CD8-positive, alpha-beta T cell (primary cell): ENCODE measurements at regions of chr19 and their contacts with region 1.

Region 1: DNA sequence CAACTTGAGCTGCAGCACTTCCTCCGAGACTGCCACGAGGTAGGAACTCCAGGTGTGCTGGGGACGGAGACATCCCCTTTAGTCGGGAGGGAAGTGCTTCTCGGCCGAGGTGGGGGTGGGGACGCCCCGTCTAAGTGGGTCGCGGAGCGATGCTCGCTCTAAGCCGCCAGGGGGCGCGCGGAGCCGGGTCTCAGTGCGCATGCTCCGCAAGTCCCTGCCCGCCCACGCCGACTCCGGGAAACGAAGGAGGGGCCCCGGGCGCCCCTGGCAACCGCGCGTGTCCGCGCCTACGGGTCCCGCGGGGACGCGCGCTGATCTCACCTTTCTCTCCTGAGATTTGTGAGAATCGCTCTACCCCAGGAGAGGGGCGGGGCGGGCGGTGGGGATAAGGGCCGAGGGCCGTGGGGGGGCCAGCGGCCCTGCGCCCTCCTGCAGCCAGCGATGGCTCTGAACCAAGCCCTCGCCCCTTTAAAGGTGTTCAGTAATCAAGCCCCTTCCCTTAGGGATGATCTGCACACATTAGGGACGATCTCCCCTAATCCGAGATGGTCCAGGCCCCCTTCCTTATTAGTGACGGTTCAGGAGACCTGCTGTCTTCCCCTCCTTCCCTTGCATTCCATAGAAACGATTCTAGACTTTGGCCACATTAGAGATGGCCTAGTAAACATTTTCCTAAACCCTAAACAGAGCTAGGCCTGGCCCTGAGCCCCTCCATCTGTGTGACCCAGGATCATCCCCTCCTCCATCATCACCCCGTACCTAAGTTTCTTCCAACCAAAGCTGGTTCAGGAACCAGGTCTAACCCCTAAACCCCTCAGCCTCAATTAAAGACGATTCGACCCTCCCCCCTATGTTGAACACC is 47.3 kb upstream of the SHKBP1 start:
- DNase-seq: peak; percentile 77 to 94 (median 89)
- ATAC-seq: peak; percentile 90
- H3K4me3 ChIP-seq: peak overlapping the region; percentile 41 to 46
- H3K4me3 Mint-ChIP-seq: peak overlapping the region; percentile 66
- H3K27ac ChIP-seq: no peak overlapping the region
- H3K27ac Mint-ChIP-seq: peak overlapping the region; percentile 33
- H3K4me1 ChIP-seq: peaks cover 13% of the 10 kb centered on the region
- H3K4me1 Mint-ChIP-seq: peaks cover 14% of the 10 kb centered on the region
- H3K27me3 ChIP-seq: peaks cover 5 to 8% of the 10 kb centered on the region in 2 experiments
- H3K27me3 Mint-ChIP-seq: peaks cover 20% of the 10 kb centered on the region
- CTCF ChIP-seq: peak; percentile 92

Region 2: DNA sequence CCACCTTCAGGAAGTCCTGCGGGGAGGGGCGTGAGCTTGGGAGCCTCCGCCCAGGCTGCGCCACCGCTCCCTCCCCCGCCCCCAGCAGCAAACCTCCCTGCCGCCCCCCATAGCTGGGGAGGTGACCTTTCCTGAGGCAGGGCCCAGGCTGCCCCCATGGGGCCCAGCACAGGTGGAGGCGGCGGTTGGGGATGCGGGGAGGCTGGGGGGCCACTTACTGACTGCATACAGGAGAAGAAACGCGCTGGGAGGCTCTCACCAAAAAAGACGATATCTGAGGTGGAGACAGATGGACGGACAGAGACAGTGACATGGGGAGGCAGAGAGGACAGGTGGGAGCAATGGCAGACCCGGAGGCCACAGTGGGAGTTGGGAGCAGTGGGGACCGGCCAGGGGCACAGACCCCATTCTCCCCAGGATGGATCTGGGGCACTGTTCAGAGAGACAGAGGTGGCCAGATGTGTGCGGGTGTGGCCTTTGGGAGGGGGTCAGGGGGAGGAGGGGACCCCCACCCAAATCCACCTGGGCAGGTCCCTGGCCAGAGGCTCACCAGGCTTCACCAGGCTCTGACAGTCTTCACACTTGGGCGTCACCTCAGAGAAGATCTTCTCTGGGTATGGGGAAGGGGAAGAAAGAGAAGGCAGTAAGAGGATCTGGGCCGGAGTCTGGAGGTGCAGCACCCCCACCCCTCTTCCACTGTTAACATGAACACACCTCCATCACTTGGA is 1648.3 kb before region 1 on chr19:
- CTCF ChIA-PET with region 1: no interaction called
- POLR2A ChIA-PET with region 1: no interaction called
- intact Hi-C with region 1: no loop called
- DNase-seq: no peak
- ATAC-seq: no peak
- H3K4me3 ChIP-seq: no peak overlapping the region
- H3K4me3 Mint-ChIP-seq: no peak overlapping the region
- H3K27ac ChIP-seq: peak overlapping the region in 1 of 2 experiments; percentile 95
- H3K27ac Mint-ChIP-seq: peak overlapping the region; percentile 69
- H3K4me1 ChIP-seq: peaks cover 36% of the 10 kb centered on the region
- H3K4me1 Mint-ChIP-seq: peaks cover 34% of the 10 kb centered on the region
- H3K27me3 ChIP-seq: no peaks in the 10 kb centered on the region
- H3K27me3 Mint-ChIP-seq: no peaks in the 10 kb centered on the region
- CTCF ChIP-seq: no peak

Region 3: GRCh38 chr19:40502647-40503319 is 26.5 kb before region 1 on chr19:
- CTCF ChIA-PET with region 1: no interaction called
- POLR2A ChIA-PET with region 1: no interaction called
- intact Hi-C with region 1: no loop called
- DNase-seq: no peak
- ATAC-seq: no peak
- H3K4me3 ChIP-seq: no peak overlapping the region
- H3K4me3 Mint-ChIP-seq: no peak overlapping the region
- H3K27ac ChIP-seq: no peak overlapping the region
- H3K27ac Mint-ChIP-seq: no peak overlapping the region
- H3K4me1 ChIP-seq: no peaks in the 10 kb centered on the region
- H3K4me1 Mint-ChIP-seq: no peaks in the 10 kb centered on the region
- H3K27me3 ChIP-seq: no peaks in the 10 kb centered on the region
- H3K27me3 Mint-ChIP-seq: peaks cover 20% of the 10 kb centered on the region
- CTCF ChIP-seq: no peak

Region 4: GRCh38 chr19:40542202-40542859 is 13.0 kb after region 1 on chr19:
- CTCF ChIA-PET with region 1: interaction called, 11 read pairs
- POLR2A ChIA-PET with region 1: no interaction called
- intact Hi-C with region 1: no loop called
- DNase-seq: no peak
- ATAC-seq: no peak
- H3K4me3 ChIP-seq: no peak overlapping the region
- H3K4me3 Mint-ChIP-seq: no peak overlapping the region
- H3K27ac ChIP-seq: no peak overlapping the region
- H3K27ac Mint-ChIP-seq: no peak overlapping the region
- H3K4me1 ChIP-seq: no peaks in the 10 kb centered on the region
- H3K4me1 Mint-ChIP-seq: no peaks in the 10 kb centered on the region
- H3K27me3 ChIP-seq: no peaks in the 10 kb centered on the region
- H3K27me3 Mint-ChIP-seq: peaks cover 15% of the 10 kb centered on the region
- CTCF ChIP-seq: no peak

Region 5: DNA sequence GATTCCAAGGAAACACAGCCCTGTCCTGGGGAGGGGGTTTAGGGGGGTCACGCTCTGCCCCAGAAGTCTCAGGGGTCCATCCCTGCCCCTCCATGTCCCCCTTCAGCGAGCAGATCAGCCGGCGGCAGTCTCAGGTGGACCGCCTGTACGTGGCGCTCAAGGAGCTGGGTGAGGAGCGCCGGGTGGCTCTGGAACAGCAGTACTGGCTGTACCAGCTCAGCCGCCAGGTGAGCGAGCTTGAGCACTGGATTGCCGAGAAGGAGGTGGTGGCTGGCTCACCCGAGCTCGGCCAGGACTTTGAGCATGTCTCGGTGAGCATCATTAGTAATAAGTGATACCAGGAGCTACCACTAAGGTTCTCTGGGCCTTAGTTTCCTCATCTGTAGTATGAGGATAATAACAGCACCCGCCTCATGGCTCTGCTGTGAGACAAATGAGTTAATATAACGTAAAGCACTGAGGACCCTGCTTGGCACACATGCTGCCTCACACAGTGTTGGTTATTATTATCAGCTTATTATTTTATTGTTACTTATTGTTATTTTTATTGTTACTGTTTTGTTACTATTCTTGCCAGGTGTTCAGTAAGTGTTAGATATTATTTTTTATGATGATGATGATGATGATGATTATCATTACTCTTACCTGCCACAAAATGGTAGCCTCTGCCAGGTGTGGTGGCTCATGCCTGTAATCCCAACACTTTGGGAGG is 26.8 kb after region 1 on chr19:
- CTCF ChIA-PET with region 1: no interaction called
- POLR2A ChIA-PET with region 1: no interaction called
- intact Hi-C with region 1: no loop called
- DNase-seq: no peak
- ATAC-seq: no peak
- H3K4me3 ChIP-seq: no peak overlapping the region
- H3K4me3 Mint-ChIP-seq: no peak overlapping the region
- H3K27ac ChIP-seq: no peak overlapping the region
- H3K27ac Mint-ChIP-seq: no peak overlapping the region
- H3K4me1 ChIP-seq: peaks cover 5% of the 10 kb centered on the region
- H3K4me1 Mint-ChIP-seq: peaks cover 6% of the 10 kb centered on the region
- H3K27me3 ChIP-seq: peaks cover 3 to 11% of the 10 kb centered on the region in 2 experiments
- H3K27me3 Mint-ChIP-seq: peaks cover 45% of the 10 kb centered on the region
- CTCF ChIP-seq: no peak